WTC11 (cell line): ENCODE measurements at regions of chr22 and their contacts with region 1.

Region 1: DNA sequence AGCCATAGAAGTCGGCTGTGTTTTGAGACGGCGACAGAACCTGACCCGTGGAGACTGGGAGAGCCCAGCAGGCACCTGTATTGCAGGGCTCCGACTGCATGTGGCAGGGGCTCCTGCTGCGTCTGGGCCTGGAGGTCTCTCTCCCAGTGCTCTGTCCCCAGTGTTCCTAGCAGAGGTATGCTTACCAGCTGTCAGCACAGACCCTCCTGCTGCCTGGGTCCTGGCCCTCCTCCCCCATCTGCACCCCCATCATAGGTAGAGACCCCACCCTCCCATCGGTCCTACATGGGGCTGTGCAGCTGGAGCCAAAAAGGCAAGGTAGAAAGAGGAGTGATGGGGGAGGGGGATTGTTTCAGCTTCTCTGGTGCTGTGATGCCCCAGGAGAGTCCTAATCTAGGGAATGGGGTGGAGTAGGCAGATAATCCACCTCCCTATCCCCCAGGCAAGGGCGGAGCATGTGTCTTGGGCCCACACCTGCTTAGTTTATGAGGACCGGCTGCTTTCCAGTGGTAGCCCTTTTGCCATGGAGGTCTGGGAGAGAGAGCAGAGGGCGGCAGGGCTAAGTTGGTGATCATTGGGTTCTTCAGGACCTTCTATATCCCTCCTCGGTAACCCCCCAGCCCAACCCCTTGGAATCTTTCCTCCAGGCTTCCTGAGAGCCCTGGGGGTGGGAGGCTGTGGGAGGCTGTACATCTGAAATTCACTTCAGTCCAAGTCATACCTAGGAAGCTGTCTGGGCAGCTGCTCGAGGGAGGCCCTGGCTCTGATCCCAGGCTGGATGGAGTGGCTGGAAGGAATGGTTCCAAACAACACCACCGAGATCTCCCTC is 5.4 kb downstream of the SLC7A4 start:
- DNase-seq: no peak
- ATAC-seq: no peak
- H3K4me3 Mint-ChIP-seq: no peak overlapping the region
- H3K27ac Mint-ChIP-seq: no peak overlapping the region
- H3K4me1 Mint-ChIP-seq: peaks cover 6% of the 10 kb centered on the region
- H3K27me3 Mint-ChIP-seq: peaks cover 17% of the 10 kb centered on the region
- CTCF ChIP-seq: no peak

Region 2: GRCh38 chr22:20989323-20990138 is 37.5 kb before region 1 on chr22:
- CTCF ChIA-PET with region 1: no interaction called
- POLR2A ChIA-PET with region 1: no interaction called
- DNase-seq: no peak
- ATAC-seq: no peak
- H3K4me3 Mint-ChIP-seq: no peak overlapping the region
- H3K27ac Mint-ChIP-seq: no peak overlapping the region
- H3K4me1 Mint-ChIP-seq: no peaks in the 10 kb centered on the region
- H3K27me3 Mint-ChIP-seq: no peaks in the 10 kb centered on the region
- CTCF ChIP-seq: no peak

Region 3: GRCh38 chr22:21045585-21046294 is 18.7 kb after region 1 on chr22 and contains the start of gene LRRC74B:
- CTCF ChIA-PET with region 1: interaction called, 6 read pairs
- POLR2A ChIA-PET with region 1: interaction called, 10 read pairs
- DNase-seq: peak; percentile 97
- ATAC-seq: peak; percentile 96
- H3K4me3 Mint-ChIP-seq: peak within 1 kb of the TSS; percentile 89
- H3K27ac Mint-ChIP-seq: no peak within 1 kb of the TSS
- H3K4me1 Mint-ChIP-seq: peaks cover 11% of the 10 kb centered on the region
- H3K27me3 Mint-ChIP-seq: peaks cover 23% of the 10 kb centered on the region
- CTCF ChIP-seq: no peak
- total RNA-seq, gene LRRC74B: not detected in 3 replicates

Region 4: GRCh38 chr22:21055587-21056319 is 28.8 kb after region 1 on chr22:
- CTCF ChIA-PET with region 1: no interaction called
- POLR2A ChIA-PET with region 1: no interaction called
- DNase-seq: no peak
- ATAC-seq: peak; percentile 73
- H3K4me3 Mint-ChIP-seq: peak overlapping the region; percentile 14; the same call in 1 of the 2 replicates
- H3K27ac Mint-ChIP-seq: no peak overlapping the region
- H3K4me1 Mint-ChIP-seq: peaks cover 40% of the 10 kb centered on the region
- H3K27me3 Mint-ChIP-seq: no peaks in the 10 kb centered on the region; the same call in 1 of the 2 replicates
- CTCF ChIP-seq: no peak